Common myeloid progenitor, CD34-positive (primary cell): ENCODE measurements at regions of chr6 and their contacts with region 1.

Region 1: DNA sequence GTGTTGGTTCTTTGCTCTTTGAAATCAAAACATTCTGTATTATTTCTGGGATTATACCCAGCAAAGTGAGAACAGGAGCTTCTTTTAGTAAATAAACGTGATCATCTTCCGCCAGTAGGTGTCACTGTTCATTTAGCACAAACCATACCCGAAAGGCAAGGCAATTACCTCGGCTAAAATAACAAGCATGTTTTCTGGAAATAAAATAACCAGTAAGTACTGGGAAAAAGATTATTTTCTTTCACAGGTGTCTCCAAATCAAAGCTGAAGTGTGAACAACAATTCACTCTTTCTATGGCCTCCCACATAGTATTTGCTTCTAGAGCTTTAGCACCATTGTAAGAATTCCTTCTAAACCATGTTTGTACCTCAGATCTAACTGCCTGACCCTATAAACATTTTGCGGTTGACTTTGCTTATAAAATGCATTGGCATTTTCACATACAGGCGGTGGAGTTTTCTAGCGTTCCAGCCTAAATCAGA is 144.6 kb upstream of the AGPAT4 start:
- DNase-seq: peak; percentile 61 to 78 (median 70)
- H3K4me3 ChIP-seq: no peak overlapping the region
- H3K27ac ChIP-seq: no peak overlapping the region
- H3K4me1 ChIP-seq: no peaks in the 10 kb centered on the region
- H3K27me3 ChIP-seq: peaks cover 0 to 10% (median 0%) of the 10 kb centered on the region in 5 experiments

Region 2: DNA sequence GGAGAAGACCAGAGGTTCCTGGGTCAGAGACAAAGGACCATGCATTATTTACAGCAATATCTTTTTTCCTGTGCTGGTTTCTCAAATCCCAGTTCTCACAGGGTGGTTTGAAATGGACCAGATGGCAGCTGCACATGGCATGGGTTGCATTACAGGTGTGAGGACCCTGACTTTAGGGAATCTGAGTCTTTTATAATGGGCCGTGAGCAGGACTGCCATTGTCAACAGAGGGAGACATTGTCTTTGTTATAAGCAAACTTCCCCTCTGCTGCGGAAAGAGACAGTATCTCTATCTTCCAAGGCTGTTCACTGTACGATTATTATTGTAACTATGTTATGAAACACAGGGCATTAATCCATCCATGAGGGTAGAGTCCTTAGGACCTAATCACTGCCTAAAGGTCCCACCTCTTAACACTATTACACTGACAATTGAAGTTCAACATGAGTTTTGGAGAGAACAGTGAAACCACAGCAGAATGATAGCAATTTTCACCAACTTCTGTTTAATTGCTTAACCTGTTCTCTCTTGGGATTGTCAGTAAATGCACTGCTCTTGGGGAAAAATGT is 11.5 kb after region 1 on chr6:
- CTCF ChIA-PET with region 1: interaction called, 27 read pairs
- POLR2A ChIA-PET with region 1: no interaction called
- DNase-seq: no peak
- H3K4me3 ChIP-seq: no peak overlapping the region
- H3K27ac ChIP-seq: no peak overlapping the region
- H3K4me1 ChIP-seq: no peaks in the 10 kb centered on the region
- H3K27me3 ChIP-seq: no peaks in the 10 kb centered on the region